Gastrocnemius medialis (tissue), 4 donors: ENCODE measurements at regions of chr4 and their contacts with region 1.

Region 1: DNA sequence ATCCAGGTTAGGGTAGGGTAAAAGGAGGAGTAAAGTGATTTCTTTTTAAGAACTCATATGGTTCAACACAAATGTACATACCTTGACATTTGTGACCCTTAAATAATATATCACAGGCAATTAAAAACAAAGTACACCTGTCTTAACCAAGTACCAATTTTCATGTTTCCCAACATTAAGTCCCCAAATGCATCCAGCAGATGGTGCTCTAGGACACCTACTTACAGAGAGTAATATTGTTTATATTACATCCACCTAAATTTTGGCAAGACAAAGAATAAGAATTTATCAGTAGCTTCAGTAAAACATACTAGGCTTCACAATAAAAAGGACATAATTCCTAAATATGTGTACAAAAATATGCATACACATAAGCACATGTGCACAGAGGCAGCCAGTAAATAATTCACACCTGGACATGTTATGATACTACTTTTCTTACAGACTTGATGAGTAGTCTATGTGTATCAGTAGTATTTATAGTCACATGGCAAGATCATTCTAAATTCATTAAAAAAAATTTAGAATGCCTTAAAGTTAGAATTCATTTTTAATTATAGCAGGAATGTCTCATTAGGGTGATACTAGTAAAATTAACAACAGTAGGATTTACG is 219.7 kb downstream of the DCLK2 start:
- DNase-seq: no peak
- ATAC-seq: no peak
- H3K4me3 ChIP-seq: no peak overlapping the region
- H3K27ac ChIP-seq: no peak overlapping the region
- H3K4me1 ChIP-seq: no peaks in the 10 kb centered on the region
- H3K27me3 ChIP-seq: no peaks in the 10 kb centered on the region
- CTCF ChIP-seq: peak in 4 of 5 experiments; percentile 29 to 46 (median 37)
- POLR2A ChIP-seq: no peak

Region 2: DNA sequence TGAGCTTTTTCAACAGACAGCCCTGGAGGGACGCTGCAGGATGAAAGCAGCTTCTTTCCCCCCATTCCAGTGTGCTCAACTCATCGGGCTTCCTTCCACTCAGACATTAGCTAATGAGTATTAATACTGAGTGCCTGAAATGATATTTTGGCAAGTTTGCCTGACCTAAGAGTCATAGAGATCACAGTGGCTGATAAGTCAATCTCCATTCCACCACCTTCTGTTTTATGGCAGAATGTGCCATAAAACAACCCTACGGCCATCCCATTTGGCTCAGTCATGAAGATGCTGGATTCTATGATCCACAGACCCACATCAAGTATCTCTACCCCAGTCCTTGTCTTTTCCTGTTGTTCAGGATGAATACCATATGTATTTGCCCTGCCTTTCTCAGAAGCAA is 235.7 kb after region 1 on chr4:
- in situ Hi-C with region 1: no loop called
- intact Hi-C with region 1: no loop called
- DNase-seq: no peak
- ATAC-seq: no peak
- H3K4me3 ChIP-seq: no peak overlapping the region
- H3K27ac ChIP-seq: no peak overlapping the region
- H3K4me1 ChIP-seq: no peaks in the 10 kb centered on the region
- H3K27me3 ChIP-seq: no peaks in the 10 kb centered on the region
- CTCF ChIP-seq: no peak
- POLR2A ChIP-seq: no peak

Region 3: GRCh38 chr4:150852216-150852615 is 554.2 kb after region 1 on chr4:
- in situ Hi-C with region 1: loop called in 3 of 4 experiments (anchors 10 to 25 kb)
- intact Hi-C with region 1: no loop called
- DNase-seq: no peak
- ATAC-seq: no peak
- H3K4me3 ChIP-seq: no peak overlapping the region
- H3K27ac ChIP-seq: no peak overlapping the region
- H3K4me1 ChIP-seq: no peaks in the 10 kb centered on the region
- H3K27me3 ChIP-seq: no peaks in the 10 kb centered on the region
- CTCF ChIP-seq: no peak
- POLR2A ChIP-seq: no peak

Region 4: GRCh38 chr4:150867148-150867547 is 569.2 kb after region 1 on chr4:
- in situ Hi-C with region 1: loop called in 3 of 4 experiments (anchors 10 to 25 kb)
- intact Hi-C with region 1: loop called (anchors 1 kb)
- DNase-seq: no peak
- ATAC-seq: peak; percentile 76 to 91
- H3K4me3 ChIP-seq: no peak overlapping the region
- H3K27ac ChIP-seq: no peak overlapping the region
- H3K4me1 ChIP-seq: no peaks in the 10 kb centered on the region
- H3K27me3 ChIP-seq: no peaks in the 10 kb centered on the region
- CTCF ChIP-seq: peak; percentile 40 to 61 (median 53)
- POLR2A ChIP-seq: no peak